PC-9 (cell line): ENCODE measurements at regions of chr6 and their contacts with region 1.

Region 1: DNA sequence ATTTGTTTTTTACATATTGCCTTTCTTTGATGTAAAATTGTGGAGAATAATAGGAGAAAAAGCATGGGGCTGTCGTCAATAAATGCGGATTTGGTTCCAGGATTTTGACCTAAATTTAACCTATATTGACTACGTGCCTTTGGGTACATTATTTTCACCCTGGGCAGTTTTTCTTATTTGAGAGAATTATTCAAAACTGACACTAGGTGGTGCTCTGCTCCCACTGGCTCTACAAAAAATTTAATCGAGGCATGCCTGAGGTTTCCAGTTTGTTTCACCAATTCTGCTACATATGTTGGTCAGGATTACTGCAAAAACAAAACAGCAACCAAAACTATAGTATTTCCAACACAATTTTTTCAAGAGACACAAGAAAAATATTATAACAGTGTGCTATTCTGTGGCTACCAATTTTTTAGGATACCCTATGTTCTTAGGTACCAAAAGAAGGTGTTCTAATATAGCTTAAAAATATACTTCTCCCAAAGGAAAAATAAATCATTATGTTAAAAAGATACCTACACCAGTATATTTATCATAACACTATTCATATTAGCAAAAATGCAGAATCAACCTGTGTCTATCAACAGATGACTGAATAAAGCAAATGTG is 48.6 kb upstream of the FABP7 start:
- DNase-seq: no peak
- H3K4me3 ChIP-seq: no peak overlapping the region
- H3K27ac ChIP-seq: no peak overlapping the region
- H3K4me1 ChIP-seq: no peaks in the 10 kb centered on the region
- H3K27me3 ChIP-seq: no peaks in the 10 kb centered on the region
- CTCF ChIP-seq: peak; percentile 95

Region 2: DNA sequence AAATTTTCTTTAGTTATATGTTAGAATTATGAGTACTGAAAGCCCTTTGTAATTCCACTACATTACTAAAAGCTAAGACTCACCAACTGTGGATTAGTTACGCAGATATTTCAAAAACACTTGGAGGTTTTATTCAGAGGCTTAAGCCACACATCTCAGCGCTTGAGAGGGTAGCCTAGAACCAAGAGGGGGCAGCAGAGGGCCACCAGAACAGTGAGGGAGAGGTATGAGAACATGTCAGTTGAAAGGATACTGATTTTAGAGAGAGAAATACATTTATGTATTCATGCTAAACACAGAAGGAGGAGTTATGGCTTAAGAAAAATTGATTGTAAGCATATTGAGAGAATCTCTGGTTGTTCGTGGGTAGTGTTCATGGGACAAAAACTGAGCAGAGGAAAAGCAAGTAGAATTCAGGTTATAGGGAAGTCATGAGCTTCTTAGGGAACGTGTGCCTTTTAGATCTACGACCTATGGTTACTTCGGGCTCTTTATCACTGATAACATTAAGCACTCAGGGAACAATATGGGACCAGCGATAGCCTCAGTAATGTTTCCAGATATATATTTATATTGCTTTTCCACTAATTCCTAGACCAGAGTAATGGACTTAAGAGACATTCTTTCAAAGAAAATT is 238.8 kb before region 1 on chr6:
- CTCF ChIA-PET with region 1: no interaction called
- POLR2A ChIA-PET with region 1: no interaction called
- intact Hi-C with region 1: loop called (anchors 1 kb)
- DNase-seq: peak; percentile 54 to 62
- H3K4me3 ChIP-seq: no peak overlapping the region
- H3K27ac ChIP-seq: no peak overlapping the region
- H3K4me1 ChIP-seq: peaks cover 13% of the 10 kb centered on the region
- H3K27me3 ChIP-seq: no peaks in the 10 kb centered on the region
- CTCF ChIP-seq: peak; percentile 96

Region 3: DNA sequence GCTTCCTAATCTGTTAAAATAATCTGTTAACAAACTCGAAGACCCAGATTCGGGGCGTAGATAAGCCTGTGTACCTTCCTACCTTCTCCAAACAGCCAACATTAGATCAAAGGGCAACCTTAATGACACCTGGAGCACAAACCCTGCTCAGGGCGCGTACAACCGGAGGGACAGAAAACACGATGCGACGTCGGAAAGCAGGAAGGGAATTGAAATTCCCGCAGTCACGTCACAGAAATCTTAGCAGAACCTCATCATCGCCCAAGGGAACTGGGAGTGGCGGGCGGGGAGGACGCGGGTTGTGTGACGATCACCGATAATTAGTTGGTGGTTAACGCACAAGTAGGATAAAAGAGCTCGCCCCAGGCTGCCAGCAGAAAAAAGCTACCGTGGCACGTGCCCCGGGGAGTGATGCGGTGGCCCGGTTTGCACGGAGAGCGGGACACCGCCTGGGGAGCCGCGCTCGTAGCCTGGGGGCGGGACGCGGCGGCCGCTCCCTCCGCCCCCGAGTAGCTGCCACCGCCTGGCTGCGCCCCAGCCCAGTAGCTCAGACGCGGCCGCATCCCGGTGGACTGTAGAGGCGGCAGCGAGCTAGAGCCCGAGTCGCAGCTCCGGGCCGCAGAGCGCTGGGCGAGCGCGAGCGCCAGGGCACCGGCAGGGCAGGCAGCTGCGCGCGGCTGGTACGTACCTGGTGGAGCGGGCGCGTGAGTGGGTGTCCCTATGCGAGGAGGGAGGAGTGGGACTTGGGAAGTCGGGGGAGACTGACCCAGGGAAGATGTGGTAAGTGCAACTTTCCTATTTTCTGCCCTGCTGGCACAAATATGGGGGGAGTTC is 120.8 kb before region 1 on chr6 and contains the start of gene PKIB:
- CTCF ChIA-PET with region 1: interaction called, 6 read pairs
- POLR2A ChIA-PET with region 1: no interaction called
- intact Hi-C with region 1: loop called (anchors 1 kb)
- DNase-seq: peak; percentile 82 to 84
- H3K4me3 ChIP-seq: peak within 1 kb of the TSS; percentile 87
- H3K27ac ChIP-seq: peak within 1 kb of the TSS; percentile 65
- H3K4me1 ChIP-seq: peaks cover 23% of the 10 kb centered on the region
- H3K27me3 ChIP-seq: no peaks in the 10 kb centered on the region
- CTCF ChIP-seq: no peak; the same call in none of the 2 replicates
- total RNA-seq, gene PKIB: 4.8 and 7.0 TPM in 2 replicates

Region 4: DNA sequence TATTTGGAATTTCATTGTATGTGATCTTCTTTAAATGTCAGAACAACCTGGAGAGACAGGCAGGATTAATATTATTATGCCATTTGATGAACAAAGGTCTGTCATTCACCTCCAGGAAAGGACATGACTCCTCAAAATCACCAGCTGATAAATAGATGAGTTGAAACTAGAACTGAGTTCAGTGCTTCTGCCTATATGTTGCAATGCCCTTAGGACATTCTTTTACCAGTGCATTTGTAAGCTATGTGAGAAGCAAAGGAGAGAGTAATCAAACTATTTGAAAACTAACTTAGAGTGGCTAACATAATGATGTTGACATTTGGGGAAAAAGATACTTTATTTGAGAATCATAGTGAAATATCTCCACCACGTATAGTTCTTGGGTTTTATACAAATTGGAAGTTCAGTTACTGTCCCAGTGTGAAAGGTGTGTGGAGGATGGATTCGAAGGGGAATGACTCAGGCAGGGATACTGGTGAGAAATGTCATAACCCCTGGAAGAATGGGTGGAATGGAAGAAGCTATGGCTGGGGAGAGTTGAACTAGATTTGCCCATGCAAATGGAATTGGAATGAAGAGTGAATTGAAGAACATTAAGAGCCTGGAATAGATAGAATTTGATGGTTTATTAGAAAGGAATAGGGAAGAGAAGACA is 99.2 kb before region 1 on chr6:
- CTCF ChIA-PET with region 1: no interaction called
- POLR2A ChIA-PET with region 1: no interaction called
- intact Hi-C with region 1: no loop called
- DNase-seq: no peak
- H3K4me3 ChIP-seq: no peak overlapping the region
- H3K27ac ChIP-seq: no peak overlapping the region
- H3K4me1 ChIP-seq: peaks cover 12% of the 10 kb centered on the region
- H3K27me3 ChIP-seq: no peaks in the 10 kb centered on the region
- CTCF ChIP-seq: no peak

Region 5: DNA sequence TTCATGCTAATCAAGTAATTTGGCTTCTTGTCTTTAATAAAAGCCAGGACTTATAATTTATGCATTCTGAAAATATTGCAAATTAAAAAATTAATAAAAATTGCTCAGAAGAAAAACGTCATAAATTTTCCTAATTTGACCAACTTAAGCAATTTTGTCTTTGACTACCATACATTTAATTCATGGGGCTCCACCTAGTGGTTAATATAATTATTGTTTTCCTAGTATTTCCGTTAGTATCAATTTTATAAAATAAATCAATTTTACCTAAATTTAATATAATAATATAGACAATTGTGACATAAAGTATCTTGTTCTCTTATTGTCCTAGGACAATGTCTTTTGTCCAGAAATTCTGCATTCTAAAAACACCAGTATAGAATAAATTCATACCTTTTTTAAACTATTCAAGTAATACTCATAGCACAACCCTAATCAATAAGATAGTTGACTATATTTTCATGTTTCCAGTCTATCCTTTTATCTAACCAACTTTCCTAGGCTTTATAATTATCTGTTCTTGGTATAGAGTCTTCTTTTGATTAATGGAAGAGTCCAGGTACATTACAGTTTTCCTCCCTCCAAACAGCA is 585.9 kb after region 1 on chr6:
- CTCF ChIA-PET with region 1: no interaction called
- POLR2A ChIA-PET with region 1: no interaction called
- intact Hi-C with region 1: loop called (anchors 2 kb)
- DNase-seq: no peak
- H3K4me3 ChIP-seq: no peak overlapping the region
- H3K27ac ChIP-seq: no peak overlapping the region
- H3K4me1 ChIP-seq: no peaks in the 10 kb centered on the region
- H3K27me3 ChIP-seq: no peaks in the 10 kb centered on the region
- CTCF ChIP-seq: peak; percentile 89

Region 6: GRCh38 chr6:123380257-123380656 is 649.4 kb after region 1 on chr6:
- CTCF ChIA-PET with region 1: no interaction called
- POLR2A ChIA-PET with region 1: no interaction called
- intact Hi-C with region 1: loop called (anchors 2 kb)
- DNase-seq: no peak
- H3K4me3 ChIP-seq: no peak overlapping the region
- H3K27ac ChIP-seq: no peak overlapping the region
- H3K4me1 ChIP-seq: no peaks in the 10 kb centered on the region
- H3K27me3 ChIP-seq: no peaks in the 10 kb centered on the region
- CTCF ChIP-seq: peak; percentile 61